ENCODE measurements at regions of chr10 and their contacts with region 1.

Region 1: GRCh38 chr10:48656241-48656913 is 28.3 kb upstream of the WDFY4 start:
- DNase-seq: peak; percentile 78 to 96
- H3K4me3 ChIP-seq: peak overlapping the region in 3 of 4 experiments; percentile 18 to 54 (median 32); a peak in 6 of 8 replicates
- H3K27ac ChIP-seq: no peak overlapping the region
- H3K4me1 ChIP-seq: peaks cover 0 to 12% (median 5%) of the 10 kb centered on the region in 4 experiments; a peak in 5 of 7 replicates
- H3K27me3 ChIP-seq: peaks cover 0 to 20% (median 9%) of the 10 kb centered on the region in 4 experiments; a peak in 5 of 7 replicates
- CTCF ChIP-seq: peak; percentile 96 to 99 (median 99)
- EP300 ChIP-seq: no peak
- POLR2A ChIP-seq: no peak
- RAD21 ChIP-seq: peak; percentile 83 to 90

Region 2: DNA sequence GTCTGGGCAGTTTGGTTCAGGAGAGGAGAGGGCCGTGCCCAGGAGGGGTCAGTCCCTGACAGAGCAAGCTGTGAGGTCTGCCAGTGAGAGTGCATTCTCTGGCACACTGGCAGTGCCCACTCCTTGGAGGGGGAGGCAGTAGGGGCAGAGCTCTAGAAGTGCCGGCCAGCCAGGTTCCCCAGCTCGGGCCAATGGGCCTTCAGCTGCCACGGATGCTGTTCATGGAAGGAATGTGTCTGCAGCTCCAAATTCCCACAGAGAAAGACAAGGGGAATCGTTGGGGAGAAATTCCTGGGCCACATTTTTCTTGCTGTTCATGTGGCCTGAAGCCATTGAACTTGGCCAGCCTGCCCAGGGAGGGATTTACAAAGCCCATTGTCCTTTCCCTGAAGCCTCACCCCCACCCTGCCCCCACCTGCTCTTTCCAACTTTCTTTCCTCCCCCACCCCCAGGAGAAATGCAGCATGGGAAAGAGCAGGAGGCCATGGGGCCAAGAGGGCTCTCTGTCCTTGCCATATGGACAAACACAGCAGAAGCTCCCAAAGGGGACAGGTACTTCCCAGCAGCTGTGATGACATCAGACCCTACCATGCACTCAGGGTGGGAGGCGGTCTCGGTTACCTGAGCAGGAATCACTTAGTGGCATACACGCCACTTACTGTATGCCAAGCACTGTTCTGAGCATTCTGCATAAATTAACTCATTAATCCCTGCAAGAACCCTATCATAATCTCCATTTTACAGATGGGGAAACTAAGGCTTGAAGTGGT is 122.2 kb before region 1 on chr10:
- CTCF ChIA-PET with region 1: interaction called, 16 read pairs
- POLR2A ChIA-PET with region 1: interaction called, 3 read pairs
- DNase-seq: no peak
- H3K4me3 ChIP-seq: peak overlapping the region in 1 of 4 experiments; percentile 1; a peak in 1 of 8 replicates
- H3K27ac ChIP-seq: peak overlapping the region; percentile 17; the same call in 1 of the 2 replicates
- H3K4me1 ChIP-seq: peaks cover 0 to 31% (median 22%) of the 10 kb centered on the region in 4 experiments; a peak in 6 of 7 replicates
- H3K27me3 ChIP-seq: no peaks in the 10 kb centered on the region
- CTCF ChIP-seq: no peak
- EP300 ChIP-seq: no peak
- POLR2A ChIP-seq: no peak
- RAD21 ChIP-seq: no peak

Region 3: GRCh38 chr10:48608279-48608681 is 48.1 kb before region 1 on chr10:
- CTCF ChIA-PET with region 1: interaction called, 84 read pairs
- POLR2A ChIA-PET with region 1: no interaction called
- DNase-seq: peak; percentile 43 to 76
- H3K4me3 ChIP-seq: no peak overlapping the region
- H3K27ac ChIP-seq: no peak overlapping the region
- H3K4me1 ChIP-seq: peaks cover 0 to 17% (median 9%) of the 10 kb centered on the region in 4 experiments; a peak in 6 of 7 replicates
- H3K27me3 ChIP-seq: peaks cover 0 to 21% (median 15%) of the 10 kb centered on the region in 4 experiments; a peak in 6 of 7 replicates
- CTCF ChIP-seq: peak; percentile 80 to 93 (median 85)
- EP300 ChIP-seq: no peak
- POLR2A ChIP-seq: no peak
- RAD21 ChIP-seq: peak; percentile 49 to 70

Region 4: GRCh38 chr10:48683868-48684267 is 27.5 kb after region 1 on chr10:
- CTCF ChIA-PET with region 1: no interaction called
- POLR2A ChIA-PET with region 1: no interaction called
- DNase-seq: no peak
- H3K4me3 ChIP-seq: no peak overlapping the region
- H3K27ac ChIP-seq: no peak overlapping the region
- H3K4me1 ChIP-seq: no peaks in the 10 kb centered on the region
- H3K27me3 ChIP-seq: no peaks in the 10 kb centered on the region
- CTCF ChIP-seq: no peak
- EP300 ChIP-seq: no peak
- POLR2A ChIP-seq: no peak
- RAD21 ChIP-seq: no peak

Region 5: DNA sequence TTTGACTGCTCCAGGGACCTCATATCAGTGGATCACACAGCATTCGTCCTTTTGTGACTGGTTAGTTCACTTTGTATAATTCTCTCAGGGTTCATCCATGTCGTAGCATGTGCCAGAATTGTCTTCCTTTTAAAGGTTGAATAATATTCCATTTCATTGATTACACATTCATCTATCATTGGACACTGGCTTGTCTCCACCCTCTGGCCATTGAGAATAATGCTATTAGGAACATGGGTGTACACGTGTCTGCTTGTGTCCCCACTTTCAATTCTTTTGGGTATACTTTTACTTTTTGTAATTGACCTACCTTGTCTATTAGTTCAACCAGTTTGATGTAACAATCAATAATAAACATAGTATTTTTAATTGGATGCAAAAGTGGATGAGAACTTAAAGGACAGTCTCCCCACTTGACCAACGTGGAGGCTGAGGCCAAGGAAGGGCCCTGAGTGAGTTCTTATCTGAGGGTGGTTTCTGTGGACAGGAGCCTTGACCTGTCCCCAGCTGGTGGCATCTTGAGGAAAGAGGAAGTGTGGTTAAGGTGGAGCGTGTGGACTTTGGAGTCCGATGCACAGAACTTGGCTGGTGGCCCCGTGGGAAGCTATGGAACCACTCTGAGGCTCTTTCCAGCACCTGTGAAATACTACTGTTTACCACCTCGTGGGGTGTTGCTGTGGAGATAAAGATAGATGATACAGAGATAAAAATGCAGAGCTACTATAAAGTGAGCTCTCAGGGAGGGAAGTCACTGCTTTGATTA is 44.9 kb after region 1 on chr10:
- CTCF ChIA-PET with region 1: interaction called, 11 read pairs
- POLR2A ChIA-PET with region 1: no interaction called
- DNase-seq: no peak
- H3K4me3 ChIP-seq: no peak overlapping the region
- H3K27ac ChIP-seq: no peak overlapping the region
- H3K4me1 ChIP-seq: no peaks in the 10 kb centered on the region
- H3K27me3 ChIP-seq: no peaks in the 10 kb centered on the region; a peak in 1 of 7 replicates
- CTCF ChIP-seq: no peak
- EP300 ChIP-seq: no peak
- POLR2A ChIP-seq: no peak
- RAD21 ChIP-seq: no peak

Region 6: DNA sequence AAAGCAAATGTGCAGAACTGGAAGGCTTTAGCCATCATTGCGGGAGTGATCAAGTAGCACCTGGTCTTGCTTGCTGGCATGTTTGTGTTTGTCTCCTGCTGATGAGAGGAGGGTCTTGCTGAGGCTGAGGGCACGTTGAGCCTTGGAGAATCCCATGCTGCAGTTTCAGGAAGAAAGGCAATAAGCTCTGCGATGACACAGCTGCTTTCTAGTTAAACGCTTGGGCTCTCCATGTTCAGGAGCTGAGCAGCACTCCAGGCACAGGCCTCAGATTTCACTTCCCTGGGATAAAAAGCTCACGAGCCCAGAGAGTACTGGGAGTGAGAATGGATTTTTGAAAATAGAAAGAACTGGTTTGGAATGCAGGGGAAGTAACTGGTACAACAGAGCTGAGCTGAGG is 182.5 kb after region 1 on chr10:
- CTCF ChIA-PET with region 1: no interaction called
- POLR2A ChIA-PET with region 1: no interaction called
- DNase-seq: no peak
- H3K4me3 ChIP-seq: no peak overlapping the region
- H3K27ac ChIP-seq: no peak overlapping the region
- H3K4me1 ChIP-seq: peaks cover 0 to 2% (median 0%) of the 10 kb centered on the region in 4 experiments; a peak in 1 of 7 replicates
- H3K27me3 ChIP-seq: no peaks in the 10 kb centered on the region
- CTCF ChIP-seq: no peak
- EP300 ChIP-seq: no peak
- POLR2A ChIP-seq: no peak
- RAD21 ChIP-seq: no peak

Region 7: DNA sequence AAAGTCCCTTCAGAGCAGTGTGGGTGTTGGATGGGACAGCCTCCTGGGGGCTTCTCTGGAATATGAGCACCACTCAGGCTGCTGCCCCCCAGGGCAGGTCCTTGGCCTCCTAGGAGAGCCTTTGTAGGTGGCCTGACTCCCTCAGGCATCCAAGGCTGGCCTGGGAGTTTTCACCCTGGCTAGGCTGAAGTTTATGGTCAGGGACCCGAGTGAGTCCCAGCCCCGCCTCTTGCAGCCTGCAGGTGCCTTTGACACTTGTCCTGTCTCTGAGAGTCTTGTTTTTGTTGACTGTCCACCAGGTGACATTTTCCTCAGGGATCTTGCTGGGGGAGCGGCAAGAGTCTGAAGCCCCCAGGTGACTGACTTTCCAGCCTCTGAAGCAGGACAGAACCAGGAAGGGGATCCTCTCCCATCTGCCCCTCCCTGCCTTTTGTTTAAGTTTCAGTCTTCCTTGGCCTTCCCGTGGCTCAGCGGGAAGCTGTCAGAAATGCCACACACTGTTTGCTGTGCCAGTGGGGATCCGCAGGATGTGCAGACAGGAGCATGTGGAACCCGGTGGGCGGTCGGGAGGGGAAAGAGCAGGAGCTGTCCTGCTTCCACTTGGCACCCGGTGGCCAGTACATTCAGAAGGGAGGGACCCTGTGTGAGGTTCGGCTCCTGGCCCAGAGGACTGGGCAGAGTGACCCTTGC is 223.8 kb after region 1 on chr10:
- CTCF ChIA-PET with region 1: interaction called, 14 read pairs
- POLR2A ChIA-PET with region 1: no interaction called
- DNase-seq: no peak
- H3K4me3 ChIP-seq: no peak overlapping the region
- H3K27ac ChIP-seq: no peak overlapping the region
- H3K4me1 ChIP-seq: peaks cover 0 to 2% (median 0%) of the 10 kb centered on the region in 4 experiments; a peak in 1 of 7 replicates
- H3K27me3 ChIP-seq: no peaks in the 10 kb centered on the region
- CTCF ChIP-seq: no peak
- EP300 ChIP-seq: no peak
- POLR2A ChIP-seq: no peak
- RAD21 ChIP-seq: no peak

Region 8: DNA sequence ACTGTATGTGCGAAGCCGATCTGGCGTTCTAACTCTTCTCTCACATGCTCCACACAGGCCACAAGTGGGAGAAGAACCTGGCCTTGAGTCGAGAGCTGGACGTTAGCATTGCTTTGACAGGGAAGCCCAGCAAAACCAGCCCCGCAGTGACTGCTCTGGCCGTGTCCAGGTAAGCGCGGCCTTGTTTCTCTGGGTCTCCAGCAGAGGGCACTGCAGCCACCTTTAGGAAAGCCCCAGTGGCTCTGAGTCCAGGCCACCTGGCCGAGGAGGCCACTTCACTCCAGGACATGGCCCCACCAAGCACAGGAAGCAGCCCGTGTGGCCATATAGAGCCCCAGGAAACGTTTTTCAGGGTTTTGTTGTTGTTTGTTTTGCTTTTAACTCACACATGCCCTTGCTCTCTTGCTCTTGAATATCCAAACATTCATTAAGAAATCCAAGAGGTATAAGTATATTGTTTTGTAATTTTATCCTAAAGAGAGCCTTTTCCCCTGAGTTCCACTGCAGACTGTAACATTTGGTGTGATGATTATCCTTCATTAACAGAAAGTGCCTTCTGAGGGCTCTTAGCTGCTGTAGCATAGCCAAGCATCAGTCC is 325.0 kb after region 1 on chr10:
- CTCF ChIA-PET with region 1: interaction called, 17 read pairs
- POLR2A ChIA-PET with region 1: no interaction called
- DNase-seq: peak; percentile 44 to 88
- H3K4me3 ChIP-seq: no peak overlapping the region
- H3K27ac ChIP-seq: no peak overlapping the region
- H3K4me1 ChIP-seq: no peaks in the 10 kb centered on the region
- H3K27me3 ChIP-seq: no peaks in the 10 kb centered on the region
- CTCF ChIP-seq: peak; percentile 84 to 98 (median 93)
- EP300 ChIP-seq: no peak
- POLR2A ChIP-seq: no peak
- RAD21 ChIP-seq: peak; percentile 92 to 97

Measured in H1 (cell line).